K562 (cell line): ENCODE measurements at regions of chr3 and their contacts with region 1.

Region 1: GRCh38 chr3:157354722-157355121 is 81.9 kb upstream of the PTX3 start:
- DNase-seq: peak; percentile 16 to 24 (median 19)
- ATAC-seq: peak; percentile 67; the same call in 2 of the 3 replicates
- H3K4me3 ChIP-seq: no peak overlapping the region
- H3K27ac ChIP-seq: no peak overlapping the region
- H3K4me1 ChIP-seq: peaks cover 0 to 7% of the 10 kb centered on the region in 2 experiments; a peak in 3 of 5 replicates
- H3K27me3 ChIP-seq: no peaks in the 10 kb centered on the region
- CTCF ChIP-seq: peak; percentile 33 to 59 (median 58); a peak in 5 of 6 replicates
- EP300 ChIP-seq: no peak
- POLR2A ChIP-seq: no peak
- RAD21 ChIP-seq: peak; percentile 39 to 54

Region 2: GRCh38 chr3:157447026-157447694 is 92.4 kb after region 1 on chr3:
- CTCF ChIA-PET with region 1: interaction called, 3 read pairs
- POLR2A ChIA-PET with region 1: no interaction called
- in situ Hi-C with region 1: no loop called
- intact Hi-C with region 1: loop called (anchors 5 kb)
- DNase-seq: no peak
- ATAC-seq: no peak
- H3K4me3 ChIP-seq: no peak overlapping the region
- H3K27ac ChIP-seq: no peak overlapping the region
- H3K4me1 ChIP-seq: peaks cover 0 to 8% of the 10 kb centered on the region in 2 experiments; a peak in 3 of 5 replicates
- H3K27me3 ChIP-seq: no peaks in the 10 kb centered on the region
- CTCF ChIP-seq: peak; percentile 36 to 60 (median 37); a peak in 4 of 6 replicates
- EP300 ChIP-seq: no peak
- POLR2A ChIP-seq: no peak
- RAD21 ChIP-seq: peak; percentile 74 to 82

Region 3: DNA sequence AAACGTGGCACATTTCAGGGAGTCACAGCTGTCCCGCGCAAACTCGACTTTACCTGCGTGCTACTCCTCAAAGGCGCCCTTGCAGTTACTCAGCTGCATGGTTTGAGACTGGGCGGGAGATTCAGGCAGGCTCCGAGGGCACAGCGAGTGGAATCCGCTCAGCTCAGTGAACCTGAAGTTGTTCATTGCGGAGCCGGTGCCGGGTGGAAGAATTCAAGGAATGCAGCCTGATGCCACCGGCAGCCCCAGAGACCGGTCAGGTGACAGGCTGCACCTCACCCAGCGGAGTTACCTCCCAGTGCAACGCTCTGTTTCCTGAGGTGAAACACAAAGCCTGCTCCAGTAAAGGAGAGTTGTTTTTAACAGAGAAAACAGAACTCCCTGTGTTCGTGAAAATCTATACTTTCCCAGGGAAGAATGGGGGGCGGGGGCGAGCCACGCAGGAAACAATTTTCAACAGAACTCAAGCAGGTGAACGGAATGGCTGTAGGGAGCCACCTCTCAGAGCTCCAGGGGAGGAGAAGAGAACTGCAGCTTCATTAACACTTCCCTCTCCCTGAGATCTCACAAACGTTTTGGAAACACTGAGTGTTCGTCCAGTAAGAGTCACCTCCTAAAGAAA is 144.7 kb after region 1 on chr3:
- CTCF ChIA-PET with region 1: no interaction called
- POLR2A ChIA-PET with region 1: no interaction called
- in situ Hi-C with region 1: no loop called
- intact Hi-C with region 1: loop called (anchors 5 kb)
- DNase-seq: no peak
- ATAC-seq: no peak; the same call in 2 of the 3 replicates
- H3K4me3 ChIP-seq: no peak overlapping the region
- H3K27ac ChIP-seq: no peak overlapping the region
- H3K4me1 ChIP-seq: peaks cover 4 to 12% of the 10 kb centered on the region in 2 experiments
- H3K27me3 ChIP-seq: no peaks in the 10 kb centered on the region; a peak in 1 of 5 replicates
- CTCF ChIP-seq: no peak
- EP300 ChIP-seq: no peak
- POLR2A ChIP-seq: no peak
- RAD21 ChIP-seq: no peak